ENCODE measurements at regions of chr2 and their contacts with region 1.

Region 1: GRCh38 chr2:32074134-32074506 is 10.8 kb downstream of the SPAST start:
- DNase-seq: no peak
- ATAC-seq: no peak
- H3K4me3 ChIP-seq: no peak overlapping the region
- H3K4me3 Mint-ChIP-seq: no peak overlapping the region
- H3K27ac ChIP-seq: no peak overlapping the region
- H3K27ac Mint-ChIP-seq: no peak overlapping the region
- H3K4me1 ChIP-seq: peaks cover 0 to 2% of the 10 kb centered on the region in 2 experiments
- H3K4me1 Mint-ChIP-seq: peaks cover 39 to 47% (median 39%) of the 10 kb centered on the region in 3 donors
- H3K27me3 ChIP-seq: no peaks in the 10 kb centered on the region
- H3K27me3 Mint-ChIP-seq: no peaks in the 10 kb centered on the region

Region 2: GRCh38 chr2:32063310-32064161 is 10.6 kb before region 1 on chr2 and contains the start of gene SPAST:
- CTCF ChIA-PET with region 1: no interaction called
- POLR2A ChIA-PET with region 1: no interaction called
- DNase-seq: peak; percentile 91 to 97 (median 94)
- ATAC-seq: peak; percentile 88 to 92 (median 91)
- H3K4me3 ChIP-seq: peak within 1 kb of the TSS; percentile 83 to 85
- H3K4me3 Mint-ChIP-seq: peak within 1 kb of the TSS; percentile 97 to 99 (median 98)
- H3K27ac ChIP-seq: peak within 1 kb of the TSS; percentile 70
- H3K27ac Mint-ChIP-seq: peak within 1 kb of the TSS; percentile 94 to 98
- H3K4me1 ChIP-seq: peaks cover 16 to 21% of the 10 kb centered on the region in 2 experiments
- H3K4me1 Mint-ChIP-seq: peaks cover 41 to 43% (median 42%) of the 10 kb centered on the region in 3 donors
- H3K27me3 ChIP-seq: no peaks in the 10 kb centered on the region
- H3K27me3 Mint-ChIP-seq: no peaks in the 10 kb centered on the region
- total RNA-seq, gene SPAST: 17.7 to 21.9 (median 19.9) TPM

Region 3: DNA sequence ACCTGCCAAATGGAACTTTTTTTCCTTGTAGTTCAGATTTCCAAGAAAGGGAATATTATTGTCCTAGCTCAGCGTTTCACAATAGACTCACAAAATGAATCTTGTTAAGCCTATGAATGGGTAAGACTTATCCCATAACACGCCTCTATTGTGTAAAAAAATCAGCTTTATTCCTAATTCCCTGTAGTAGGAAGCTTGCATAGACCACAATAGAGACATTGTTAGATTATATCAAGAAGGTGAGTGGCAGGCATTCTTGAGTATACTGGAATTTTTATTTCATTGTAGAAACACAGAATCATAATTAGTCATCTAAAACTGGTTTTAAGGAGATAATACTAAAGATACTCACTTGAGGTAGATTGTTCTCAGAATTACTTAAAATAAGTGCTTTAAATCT is 45.0 kb after region 1 on chr2:
- CTCF ChIA-PET with region 1: no interaction called
- POLR2A ChIA-PET with region 1: interaction called in 1 of 2 experiments, 11 read pairs
- DNase-seq: no peak
- ATAC-seq: no peak
- H3K4me3 ChIP-seq: no peak overlapping the region
- H3K4me3 Mint-ChIP-seq: no peak overlapping the region
- H3K27ac ChIP-seq: no peak overlapping the region
- H3K27ac Mint-ChIP-seq: no peak overlapping the region
- H3K4me1 ChIP-seq: no peaks in the 10 kb centered on the region
- H3K4me1 Mint-ChIP-seq: peaks cover 0 to 5% (median 2%) of the 10 kb centered on the region in 3 donors
- H3K27me3 ChIP-seq: no peaks in the 10 kb centered on the region
- H3K27me3 Mint-ChIP-seq: no peaks in the 10 kb centered on the region

Region 4: DNA sequence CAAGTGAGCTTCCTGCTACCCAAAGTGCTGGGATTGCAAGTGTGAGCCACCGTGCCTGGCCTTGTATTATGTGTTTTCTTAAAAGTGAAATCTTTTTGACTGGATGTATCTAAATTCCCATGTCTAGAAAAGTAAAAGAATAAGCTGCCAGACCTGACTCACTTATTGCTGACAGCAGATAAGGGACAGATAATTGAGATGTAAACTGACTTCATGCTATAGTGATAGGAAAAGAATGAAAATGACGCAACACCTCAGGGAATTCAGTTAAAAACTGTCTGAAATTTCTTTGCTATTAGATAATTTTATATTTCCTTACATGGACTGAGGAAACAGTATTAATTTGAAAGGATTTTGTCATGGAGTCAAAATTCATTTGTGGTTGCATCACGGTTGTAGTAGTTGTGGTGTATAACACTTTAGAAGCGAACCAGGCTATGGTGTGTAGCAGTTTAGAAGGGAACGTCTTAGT is 573.1 kb after region 1 on chr2:
- CTCF ChIA-PET with region 1: no interaction called
- POLR2A ChIA-PET with region 1: interaction called in 1 of 2 experiments, 15 read pairs
- DNase-seq: no peak
- ATAC-seq: no peak
- H3K4me3 ChIP-seq: no peak overlapping the region
- H3K4me3 Mint-ChIP-seq: no peak overlapping the region
- H3K27ac ChIP-seq: no peak overlapping the region
- H3K27ac Mint-ChIP-seq: no peak overlapping the region
- H3K4me1 ChIP-seq: no peaks in the 10 kb centered on the region
- H3K4me1 Mint-ChIP-seq: peaks cover 0 to 3% (median 0%) of the 10 kb centered on the region in 3 donors
- H3K27me3 ChIP-seq: no peaks in the 10 kb centered on the region
- H3K27me3 Mint-ChIP-seq: no peaks in the 10 kb centered on the region